ENCODE measurements at regions of chr19 and their contacts with region 1.

Region 1: GRCh38 chr19:1774999-1775772 is 21.9 kb downstream of the ONECUT3 start:
- DNase-seq: no peak
- ATAC-seq: no peak

Region 2: DNA sequence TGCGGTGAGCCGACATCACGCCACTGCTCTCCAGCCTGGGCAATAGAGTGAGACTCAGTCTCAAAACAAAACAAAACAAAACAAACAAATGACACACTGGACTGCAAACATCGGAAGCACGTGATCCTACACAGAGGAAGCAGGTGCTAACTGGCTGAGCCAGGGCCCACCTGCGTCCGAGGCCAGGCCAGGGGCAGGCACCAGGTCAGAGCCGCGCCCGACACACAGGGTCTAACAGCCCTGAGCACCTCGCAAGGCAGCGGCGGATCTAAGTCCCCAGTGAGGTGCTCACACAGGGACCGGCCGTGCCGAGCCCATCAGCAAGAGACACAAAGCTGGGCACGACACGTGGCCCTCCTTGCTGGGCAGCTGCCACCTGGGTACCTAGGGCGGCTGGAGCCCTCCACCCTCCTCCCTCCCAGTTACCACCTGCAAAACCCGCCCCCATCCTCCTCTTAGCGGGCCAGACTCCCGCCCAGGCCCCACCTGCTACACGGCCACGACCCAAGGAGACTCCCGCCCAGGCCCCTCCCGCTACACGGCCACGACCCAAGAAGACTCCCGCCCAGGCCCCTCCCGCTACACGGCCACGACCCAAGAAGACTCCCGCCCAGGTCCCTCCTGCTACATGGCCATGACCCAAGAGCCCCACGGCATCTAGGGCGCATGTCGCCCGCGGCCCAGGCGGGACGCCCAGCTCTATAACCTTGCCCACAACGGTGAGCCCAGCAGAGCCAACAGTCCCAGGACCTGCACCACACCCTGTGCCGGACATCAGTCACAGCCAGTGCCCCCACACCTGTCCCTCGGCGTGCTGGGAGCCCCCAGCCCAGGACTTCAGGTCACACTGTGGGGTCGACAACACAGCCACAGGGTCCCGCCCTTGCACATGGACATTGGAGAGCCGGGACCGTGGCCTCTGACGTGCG is 360.6 kb after region 1 on chr19:
- intact Hi-C with region 1: loop called (anchors 10 kb)
- DNase-seq: no peak
- ATAC-seq: no peak

Region 3: DNA sequence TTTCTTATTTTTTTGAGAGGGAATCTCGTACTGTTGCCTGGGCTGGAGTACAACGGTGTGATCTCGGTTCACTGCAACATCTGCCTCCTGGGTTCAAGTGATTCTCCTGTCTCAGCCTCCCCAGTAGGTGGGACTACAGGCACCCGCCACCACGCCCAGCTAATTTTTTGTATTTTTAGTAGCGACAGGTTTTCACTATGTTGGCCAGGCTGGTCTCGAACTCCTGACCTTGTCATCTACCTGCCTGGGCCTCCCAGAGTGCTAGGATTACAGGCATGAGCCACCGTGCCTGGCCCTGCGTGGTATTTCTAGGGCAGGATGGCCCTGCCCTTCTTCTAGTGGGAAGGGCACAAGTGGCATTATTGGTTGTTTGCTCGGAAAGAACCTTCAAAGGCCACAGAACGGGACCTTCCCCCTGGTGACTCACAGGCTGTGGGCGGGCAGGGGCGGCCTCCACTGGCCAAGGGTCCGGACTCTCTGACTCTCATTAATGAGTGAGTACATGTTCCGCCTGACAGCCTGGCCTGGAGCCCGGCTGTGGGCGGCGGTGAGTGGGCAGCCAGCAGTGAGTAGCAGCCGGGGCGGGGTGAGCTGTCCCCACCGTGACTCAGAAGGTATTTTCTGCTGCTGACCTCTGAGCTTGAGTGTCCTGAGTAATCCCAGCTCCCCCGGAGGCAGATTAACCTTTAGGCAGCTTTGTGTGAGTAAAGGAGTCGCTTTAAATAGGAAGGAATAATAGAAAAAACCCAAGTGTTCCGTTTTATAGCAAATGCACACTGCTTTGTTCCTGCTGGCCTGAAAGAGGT is 393.6 kb after region 1 on chr19:
- intact Hi-C with region 1: no loop called
- DNase-seq: peak; percentile 93
- ATAC-seq: peak; percentile 92

Measured in sciatic nerve (tissue), 2 donors.